CD4-positive, alpha-beta memory T cell (primary cell): ENCODE measurements at regions of chr17 and their contacts with region 1.

Region 1: DNA sequence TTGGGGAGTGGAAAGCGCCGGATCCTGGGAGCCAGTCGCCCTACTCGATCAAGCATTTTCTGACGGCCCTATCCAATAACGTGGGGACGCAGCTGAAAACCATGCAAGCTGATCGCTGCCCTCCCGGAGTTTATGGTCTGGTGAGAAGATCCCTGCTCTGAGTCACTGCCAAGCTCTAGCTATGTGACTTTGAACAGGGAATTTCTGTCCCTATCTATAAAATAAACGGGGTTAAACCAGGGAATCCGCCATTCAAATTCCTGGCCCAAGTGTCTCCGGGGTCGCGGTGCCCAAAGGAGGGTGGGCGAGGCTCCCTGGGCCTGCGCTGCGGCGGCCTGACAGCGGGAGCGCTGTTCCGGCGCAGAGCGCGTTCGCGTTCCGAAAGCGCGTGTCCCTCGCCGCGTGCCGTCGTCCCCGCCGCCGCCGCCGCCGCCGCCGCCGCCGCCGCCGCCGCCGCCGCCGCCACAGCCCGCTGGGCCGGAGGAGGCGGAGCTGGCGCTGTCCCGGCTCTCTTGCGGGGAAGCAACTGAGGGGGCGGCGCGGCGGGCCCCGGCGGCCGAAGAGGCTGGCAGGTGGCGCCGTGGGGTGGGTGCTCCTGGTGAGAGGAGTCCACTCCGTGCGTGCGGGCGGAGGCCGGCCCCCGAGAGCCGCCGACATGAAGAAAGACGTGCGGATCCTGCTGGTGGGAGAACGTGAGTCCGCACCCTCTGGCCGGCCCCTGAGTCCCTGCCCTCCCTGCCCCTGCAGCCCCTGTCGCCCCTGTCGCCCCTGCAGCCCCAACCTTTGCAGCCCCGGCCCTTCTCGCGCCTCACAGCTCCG is at the start of gene RHOT1:
- DNase-seq: peak; percentile 65 to 79 (median 75)
- H3K4me3 ChIP-seq: peak within 1 kb of the TSS; percentile 81 to 88
- H3K4me3 Mint-ChIP-seq: peak within 1 kb of the TSS; percentile 92 to 98 (median 96)
- H3K27ac ChIP-seq: peak within 1 kb of the TSS; percentile 63
- H3K27ac Mint-ChIP-seq: peak within 1 kb of the TSS; percentile 74 to 98 (median 90)
- H3K4me1 ChIP-seq: peaks cover 41% of the 10 kb centered on the region
- H3K4me1 Mint-ChIP-seq: peaks cover 21 to 49% (median 34%) of the 10 kb centered on the region in 4 donors
- H3K27me3 ChIP-seq: no peaks in the 10 kb centered on the region
- H3K27me3 Mint-ChIP-seq: no peaks in the 10 kb centered on the region
- total RNA-seq, gene RHOT1: 26.9 to 28.9 TPM

Region 2: GRCh38 chr17:31967648-31968047 is 174.6 kb before region 1 on chr17:
- CTCF ChIA-PET with region 1: no interaction called
- POLR2A ChIA-PET with region 1: no interaction called
- intact Hi-C with region 1: no loop called
- DNase-seq: no peak
- H3K4me3 ChIP-seq: no peak overlapping the region
- H3K4me3 Mint-ChIP-seq: no peak overlapping the region
- H3K27ac ChIP-seq: no peak overlapping the region
- H3K27ac Mint-ChIP-seq: no peak overlapping the region
- H3K4me1 ChIP-seq: no peaks in the 10 kb centered on the region
- H3K4me1 Mint-ChIP-seq: peaks cover 0 to 3% (median 0%) of the 10 kb centered on the region in 4 donors
- H3K27me3 ChIP-seq: no peaks in the 10 kb centered on the region
- H3K27me3 Mint-ChIP-seq: no peaks in the 10 kb centered on the region

Region 3: DNA sequence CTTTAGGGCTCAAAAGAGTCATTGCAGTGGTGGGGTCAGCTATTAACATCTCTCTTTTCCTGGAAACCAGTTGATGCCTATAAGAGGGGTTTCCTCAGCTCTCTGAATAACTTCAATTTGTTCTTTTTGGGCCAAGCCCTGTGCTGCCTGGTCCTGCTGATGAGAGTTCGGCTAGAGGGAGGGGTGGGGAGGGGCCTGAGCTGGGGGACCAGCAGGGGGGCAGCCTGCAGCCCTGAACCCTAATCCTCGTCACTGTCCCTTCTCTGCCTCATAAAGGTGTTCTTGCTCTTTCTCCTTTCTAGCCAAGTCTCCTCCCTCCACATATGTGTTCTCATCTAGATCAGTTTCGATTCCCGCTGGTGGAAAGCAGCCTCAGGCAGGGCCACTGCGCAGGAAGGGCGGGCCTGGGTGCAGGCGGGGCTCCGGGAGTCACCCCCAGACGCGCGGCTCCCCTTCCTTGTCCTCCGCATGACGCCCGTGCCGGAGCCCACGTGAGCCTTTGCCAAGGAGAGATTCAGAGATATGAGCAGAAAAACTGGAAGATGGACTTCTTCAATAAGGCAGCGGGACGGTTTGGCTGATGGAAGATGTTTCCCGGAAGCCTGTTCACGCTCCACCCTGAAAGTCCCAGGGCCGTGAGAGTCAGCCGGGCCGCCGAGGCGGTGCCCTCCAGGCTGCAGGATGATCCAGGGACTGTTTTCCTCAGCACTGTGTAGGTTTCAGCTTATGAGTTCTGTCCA is 14.9 kb before region 1 on chr17:
- CTCF ChIA-PET with region 1: interaction called, 82 read pairs
- POLR2A ChIA-PET with region 1: interaction called, 11 read pairs
- intact Hi-C with region 1: loop called (anchors 1 kb)
- DNase-seq: peak; percentile 79 to 88 (median 82)
- H3K4me3 ChIP-seq: peak overlapping the region; percentile 74 to 87
- H3K4me3 Mint-ChIP-seq: peak overlapping the region; percentile 96 to 100 (median 97)
- H3K27ac ChIP-seq: peak overlapping the region; percentile 79
- H3K27ac Mint-ChIP-seq: peak overlapping the region; percentile 93 to 99 (median 98)
- H3K4me1 ChIP-seq: peaks cover 23% of the 10 kb centered on the region
- H3K4me1 Mint-ChIP-seq: peaks cover 14 to 31% (median 22%) of the 10 kb centered on the region in 4 donors
- H3K27me3 ChIP-seq: no peaks in the 10 kb centered on the region
- H3K27me3 Mint-ChIP-seq: no peaks in the 10 kb centered on the region

Region 4: GRCh38 chr17:32227910-32228309 is 85.7 kb after region 1 on chr17:
- CTCF ChIA-PET with region 1: no interaction called
- POLR2A ChIA-PET with region 1: no interaction called
- intact Hi-C with region 1: no loop called
- DNase-seq: no peak
- H3K4me3 ChIP-seq: no peak overlapping the region
- H3K4me3 Mint-ChIP-seq: no peak overlapping the region
- H3K27ac ChIP-seq: no peak overlapping the region
- H3K27ac Mint-ChIP-seq: no peak overlapping the region
- H3K4me1 ChIP-seq: no peaks in the 10 kb centered on the region
- H3K4me1 Mint-ChIP-seq: peaks cover under 1 to 16% (median 3%) of the 10 kb centered on the region in 4 donors
- H3K27me3 ChIP-seq: no peaks in the 10 kb centered on the region
- H3K27me3 Mint-ChIP-seq: no peaks in the 10 kb centered on the region

Region 5: DNA sequence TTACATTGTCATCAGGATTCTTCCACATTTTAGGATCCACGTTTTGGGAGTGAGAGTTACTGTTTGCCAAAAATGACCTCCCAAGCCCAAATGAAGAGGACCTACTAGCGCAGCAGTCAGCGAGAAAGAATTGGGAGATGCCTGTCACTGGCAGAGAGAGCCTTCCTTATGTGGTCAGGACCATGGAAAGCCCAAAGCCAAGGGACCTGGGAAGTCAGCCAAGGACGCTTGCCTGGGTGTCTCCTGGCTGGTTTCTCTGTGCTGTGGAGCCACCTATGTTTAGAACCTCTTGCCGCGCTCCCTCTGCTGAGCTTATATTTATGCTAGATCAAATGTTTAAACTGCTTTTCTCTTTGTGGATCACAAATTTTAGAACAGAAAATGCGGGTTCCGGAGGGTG is 98.5 kb after region 1 on chr17:
- CTCF ChIA-PET with region 1: no interaction called
- POLR2A ChIA-PET with region 1: no interaction called
- intact Hi-C with region 1: no loop called
- DNase-seq: no peak
- H3K4me3 ChIP-seq: no peak overlapping the region
- H3K4me3 Mint-ChIP-seq: no peak overlapping the region
- H3K27ac ChIP-seq: no peak overlapping the region
- H3K27ac Mint-ChIP-seq: no peak overlapping the region
- H3K4me1 ChIP-seq: no peaks in the 10 kb centered on the region
- H3K4me1 Mint-ChIP-seq: no peaks in the 10 kb centered on the region
- H3K27me3 ChIP-seq: no peaks in the 10 kb centered on the region
- H3K27me3 Mint-ChIP-seq: no peaks in the 10 kb centered on the region

Region 6: DNA sequence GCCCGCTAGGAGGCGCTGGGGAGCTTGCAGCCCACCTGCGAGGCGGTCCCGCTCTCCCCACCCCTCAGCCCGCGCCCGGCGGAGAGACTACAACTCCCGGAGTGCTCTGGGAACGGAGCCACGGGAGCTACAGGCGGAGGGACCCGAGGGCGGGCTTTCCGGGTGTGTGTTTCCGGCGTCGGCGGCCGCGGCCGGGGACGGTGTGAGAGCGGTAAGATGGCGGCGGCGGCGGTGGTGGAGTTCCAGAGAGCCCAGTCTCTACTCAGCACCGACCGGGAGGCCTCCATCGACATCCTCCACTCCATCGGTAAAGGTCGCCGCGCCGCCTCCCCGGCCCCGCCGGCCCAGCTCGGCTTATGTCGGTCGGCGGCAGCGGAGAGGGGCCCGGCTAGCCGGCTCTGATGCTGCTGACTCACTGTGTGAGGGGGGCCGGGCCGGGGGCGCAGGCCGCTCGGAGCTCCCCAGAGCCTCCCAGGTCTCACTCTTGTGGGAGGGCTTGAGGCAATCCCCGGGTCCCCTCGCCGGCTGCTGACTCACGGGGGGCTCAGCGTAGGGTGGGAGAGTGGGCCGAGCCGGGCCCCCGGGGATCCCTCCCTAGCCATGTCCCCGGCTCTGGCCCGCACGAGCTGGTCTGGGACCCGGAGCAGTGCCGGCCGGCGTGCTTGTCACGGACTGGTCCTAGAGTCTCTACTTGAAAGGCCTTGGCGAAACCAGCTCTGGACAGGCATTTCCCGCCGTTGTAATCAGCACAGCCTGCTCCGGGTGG is 302.2 kb after region 1 on chr17 and contains the start of gene PSMD11:
- CTCF ChIA-PET with region 1: no interaction called
- POLR2A ChIA-PET with region 1: no interaction called
- intact Hi-C with region 1: no loop called
- DNase-seq: peak; percentile 98 to 99 (median 99)
- H3K4me3 ChIP-seq: peak within 1 kb of the TSS; percentile 66 to 71
- H3K4me3 Mint-ChIP-seq: peak within 1 kb of the TSS; percentile 85 to 96 (median 90)
- H3K27ac ChIP-seq: peak within 1 kb of the TSS; percentile 79
- H3K27ac Mint-ChIP-seq: peak within 1 kb of the TSS; percentile 33 to 96 (median 90)
- H3K4me1 ChIP-seq: peaks cover 27% of the 10 kb centered on the region
- H3K4me1 Mint-ChIP-seq: peaks cover 21 to 43% (median 31%) of the 10 kb centered on the region in 4 donors
- H3K27me3 ChIP-seq: no peaks in the 10 kb centered on the region
- H3K27me3 Mint-ChIP-seq: no peaks in the 10 kb centered on the region
- total RNA-seq, gene PSMD11: 58.0 to 68.2 TPM